K562 (cell line): ENCODE measurements at regions of chr1 and their contacts with region 1.

Region 1: GRCh38 chr1:29100487-29100886 is 23.2 kb downstream of the TMEM200B start:
- DNase-seq: no peak
- ATAC-seq: no peak
- H3K4me3 ChIP-seq: no peak overlapping the region
- H3K27ac ChIP-seq: no peak overlapping the region
- H3K4me1 ChIP-seq: no peaks in the 10 kb centered on the region
- H3K27me3 ChIP-seq: no peaks in the 10 kb centered on the region
- CTCF ChIP-seq: no peak
- EP300 ChIP-seq: no peak
- POLR2A ChIP-seq: no peak
- RAD21 ChIP-seq: no peak

Region 2: GRCh38 chr1:29113413-29114117 is 13.1 kb after region 1 on chr1:
- CTCF ChIA-PET with region 1: no interaction called
- POLR2A ChIA-PET with region 1: interaction called, 16 read pairs
- in situ Hi-C with region 1: no loop called
- intact Hi-C with region 1: no loop called
- DNase-seq: no peak
- ATAC-seq: no peak
- H3K4me3 ChIP-seq: no peak overlapping the region
- H3K27ac ChIP-seq: no peak overlapping the region
- H3K4me1 ChIP-seq: no peaks in the 10 kb centered on the region
- H3K27me3 ChIP-seq: no peaks in the 10 kb centered on the region
- CTCF ChIP-seq: no peak
- EP300 ChIP-seq: no peak
- POLR2A ChIP-seq: no peak
- RAD21 ChIP-seq: no peak

Region 3: DNA sequence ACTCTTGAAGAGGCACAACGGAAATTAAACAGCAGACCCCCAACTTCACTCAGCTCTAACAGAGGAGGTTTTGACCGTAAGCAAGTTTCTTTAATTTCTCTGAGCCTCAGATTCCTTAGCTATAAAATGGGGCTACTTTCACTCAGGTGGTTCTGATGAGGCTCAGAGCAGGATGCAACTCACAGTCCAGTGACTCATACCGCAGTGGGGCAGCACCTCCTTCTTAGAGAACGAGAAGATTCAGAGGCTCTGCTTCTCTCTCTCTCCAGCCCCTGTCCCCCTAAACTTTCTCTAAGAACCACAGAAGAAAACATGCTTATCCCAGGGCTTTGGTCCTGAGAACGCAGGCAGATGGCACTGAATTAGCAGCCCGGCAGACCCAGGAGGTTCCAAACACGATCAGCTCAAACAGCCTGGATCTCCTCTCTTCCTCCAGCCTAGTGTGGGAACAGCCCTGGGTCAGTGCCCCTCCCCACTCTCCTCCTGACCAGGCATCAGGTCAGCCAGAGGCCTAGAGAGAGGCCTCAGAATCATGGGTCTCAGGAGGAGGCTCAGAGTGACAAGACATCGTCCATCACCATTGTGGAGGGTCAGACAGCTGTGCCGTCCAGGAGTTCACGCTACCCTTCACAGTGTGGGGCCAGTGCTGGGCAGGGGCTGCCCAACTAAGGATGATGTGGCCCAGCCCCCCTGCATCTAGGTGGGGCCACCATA is 568.8 kb after region 1 on chr1:
- CTCF ChIA-PET with region 1: no interaction called
- POLR2A ChIA-PET with region 1: no interaction called
- in situ Hi-C with region 1: no loop called
- intact Hi-C with region 1: no loop called
- DNase-seq: no peak
- ATAC-seq: peak; percentile 48; the same call in 2 of the 3 replicates
- H3K4me3 ChIP-seq: no peak overlapping the region
- H3K27ac ChIP-seq: no peak overlapping the region
- H3K4me1 ChIP-seq: no peaks in the 10 kb centered on the region; a peak in 1 of 5 replicates
- H3K27me3 ChIP-seq: no peaks in the 10 kb centered on the region
- CTCF ChIP-seq: no peak
- EP300 ChIP-seq: no peak
- POLR2A ChIP-seq: no peak
- RAD21 ChIP-seq: no peak